Activated T-helper 2 cell treated with anti-CD3 and anti-CD28 coated beads, Interferon-gamma antibody, Interleukin-2, Interleukin-4, amounts not matched to agents 10 μg/mL and 5 μg/mL and 100 μg/mL, durations not matched to agents 14 hours and 24 hours and 36 hours (primary cell): ENCODE measurements at regions of chr5 and their contacts with region 1.

Region 1: DNA sequence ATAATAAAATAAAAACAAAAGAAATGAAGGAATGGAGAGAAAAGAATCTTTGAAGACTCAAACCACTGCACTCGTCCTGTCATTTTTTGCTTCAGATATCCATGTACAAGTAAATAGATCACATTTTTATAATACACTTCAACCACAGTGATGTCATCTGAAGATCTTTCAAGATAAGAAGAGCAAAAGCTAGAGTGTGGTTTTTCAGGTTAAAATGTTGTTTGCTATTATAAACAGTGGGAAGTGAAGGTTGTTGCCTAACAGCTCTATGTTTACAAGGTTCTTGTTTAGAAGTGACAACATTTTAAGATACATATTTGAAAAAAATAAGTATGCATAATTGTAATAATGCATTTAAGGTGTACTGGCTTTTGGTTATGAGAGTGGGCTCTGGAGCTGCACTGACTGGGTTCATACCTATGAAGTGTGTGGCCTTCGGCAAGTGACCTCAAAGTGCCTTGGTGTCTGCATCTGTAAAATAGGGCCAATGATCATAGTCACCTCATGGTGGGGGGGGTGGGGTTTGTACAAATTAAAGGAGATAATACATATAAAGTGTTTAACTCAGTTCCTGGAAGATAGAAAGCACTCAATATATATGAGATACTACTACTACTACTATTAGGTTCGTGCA is 45.5 kb upstream of the IL7R start:
- DNase-seq: no peak
- H3K4me3 Mint-ChIP-seq: peak overlapping the region; percentile 27
- H3K27ac Mint-ChIP-seq: peak overlapping the region; percentile 94
- H3K4me1 Mint-ChIP-seq: peaks cover 47% of the 10 kb centered on the region
- H3K27me3 Mint-ChIP-seq: no peaks in the 10 kb centered on the region

Region 2: GRCh38 chr5:35533156-35533555 is 278.1 kb before region 1 on chr5:
- intact Hi-C with region 1: no loop called
- DNase-seq: no peak
- H3K4me3 Mint-ChIP-seq: no peak overlapping the region
- H3K27ac Mint-ChIP-seq: no peak overlapping the region
- H3K4me1 Mint-ChIP-seq: no peaks in the 10 kb centered on the region
- H3K27me3 Mint-ChIP-seq: no peaks in the 10 kb centered on the region

Region 3: GRCh38 chr5:35785601-35786085 is 25.6 kb before region 1 on chr5:
- intact Hi-C with region 1: loop called (anchors 2 kb)
- DNase-seq: no peak
- H3K4me3 Mint-ChIP-seq: no peak overlapping the region
- H3K27ac Mint-ChIP-seq: peak overlapping the region; percentile 85
- H3K4me1 Mint-ChIP-seq: peaks cover 66% of the 10 kb centered on the region
- H3K27me3 Mint-ChIP-seq: no peaks in the 10 kb centered on the region

Region 4: DNA sequence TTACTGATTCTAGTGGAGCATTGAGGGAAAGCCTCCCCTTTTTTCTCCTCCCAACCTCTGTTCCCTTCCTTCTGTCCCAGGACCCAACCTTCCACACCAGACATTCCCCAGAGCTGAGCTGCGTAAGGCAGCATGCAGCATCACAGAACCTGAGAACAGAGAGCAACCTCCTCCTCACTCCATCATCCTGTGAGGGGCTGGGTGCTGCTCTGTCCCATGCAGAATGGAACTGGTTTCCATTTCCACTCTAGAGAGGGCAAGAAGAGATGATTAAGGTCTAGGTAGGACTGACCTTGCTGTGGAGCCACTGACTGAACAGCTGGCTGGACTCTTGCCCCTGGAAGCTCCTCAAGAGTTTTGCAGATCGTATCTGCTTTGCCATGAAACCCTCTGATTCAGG is 15.3 kb after region 1 on chr5:
- intact Hi-C with region 1: loop called (anchors 1 kb)
- DNase-seq: no peak
- H3K4me3 Mint-ChIP-seq: peak overlapping the region; percentile 45
- H3K27ac Mint-ChIP-seq: peak overlapping the region; percentile 94
- H3K4me1 Mint-ChIP-seq: peaks cover 81% of the 10 kb centered on the region
- H3K27me3 Mint-ChIP-seq: no peaks in the 10 kb centered on the region

Region 5: DNA sequence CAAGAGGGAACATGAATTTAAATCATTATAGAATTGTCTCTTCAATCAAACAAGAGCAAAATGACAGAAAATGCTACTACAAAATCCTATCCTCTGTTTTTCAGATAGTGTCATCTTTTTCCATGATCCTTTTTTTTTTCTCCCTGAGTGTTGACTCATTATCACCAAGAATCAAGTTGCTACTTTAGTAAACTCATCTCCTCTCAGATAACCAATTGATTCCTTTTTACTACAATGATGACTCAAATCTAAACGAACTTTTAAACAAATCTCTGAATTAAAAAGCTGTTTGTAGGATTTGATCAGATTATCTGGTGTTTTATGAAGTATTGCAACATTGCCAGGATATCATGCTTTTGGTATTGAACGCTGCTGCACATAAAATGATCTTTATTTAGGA is 21.5 kb after region 1 on chr5:
- intact Hi-C with region 1: loop called (anchors 1 kb)
- DNase-seq: no peak
- H3K4me3 Mint-ChIP-seq: no peak overlapping the region
- H3K27ac Mint-ChIP-seq: peak overlapping the region; percentile 77
- H3K4me1 Mint-ChIP-seq: peaks cover 77% of the 10 kb centered on the region
- H3K27me3 Mint-ChIP-seq: no peaks in the 10 kb centered on the region

Region 6: DNA sequence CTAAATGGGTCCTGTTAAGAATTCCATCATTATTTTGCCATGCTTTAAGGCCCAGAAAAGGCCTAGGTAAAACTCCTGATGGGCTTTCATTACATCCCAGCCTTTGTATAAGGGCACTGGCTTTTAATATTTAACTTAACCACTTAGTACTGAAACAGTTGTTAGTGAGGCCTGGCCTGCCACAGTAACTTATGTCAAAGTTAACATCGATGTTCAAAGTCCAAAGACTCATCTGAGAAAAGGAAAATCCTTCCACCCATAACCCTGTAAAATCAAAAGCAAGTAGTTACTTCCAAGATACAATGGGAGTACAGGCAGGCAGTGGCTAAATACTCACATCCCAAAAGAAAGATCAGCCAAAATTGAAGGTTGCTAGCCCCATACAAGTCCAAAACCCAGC is 194.9 kb after region 1 on chr5:
- intact Hi-C with region 1: no loop called
- DNase-seq: no peak
- H3K4me3 Mint-ChIP-seq: no peak overlapping the region
- H3K27ac Mint-ChIP-seq: no peak overlapping the region
- H3K4me1 Mint-ChIP-seq: no peaks in the 10 kb centered on the region
- H3K27me3 Mint-ChIP-seq: peaks cover 3% of the 10 kb centered on the region